ENCODE measurements at regions of chr6 and their contacts with region 1.

Region 1: GRCh38 chr6:16802071-16802470 is 40.8 kb upstream of the ATXN1 start:
- DNase-seq: no peak

Region 2: DNA sequence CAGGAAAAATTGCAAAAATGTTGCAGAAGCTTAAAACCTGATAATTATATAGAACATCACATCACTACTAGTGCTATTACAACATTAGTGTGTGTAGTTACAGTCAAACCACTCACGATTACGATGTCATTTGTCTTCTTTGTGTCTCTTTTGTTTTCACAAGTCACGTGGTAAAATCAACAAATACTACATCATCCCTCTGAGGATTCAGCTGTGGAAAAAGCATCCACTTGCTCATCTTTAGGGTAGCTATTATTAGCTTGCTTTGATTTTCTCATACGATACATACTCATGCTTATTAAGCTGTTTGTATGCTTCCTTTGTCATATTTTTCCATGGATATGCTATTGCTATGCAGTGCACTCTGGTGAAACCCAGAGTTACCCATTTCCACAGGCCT is 18.6 kb before region 1 on chr6:
- intact Hi-C with region 1: loop called in 1 of 2 experiments (anchors 1 kb)
- DNase-seq: no peak

Region 3: GRCh38 chr6:16824845-16825685 is 23.0 kb after region 1 on chr6:
- intact Hi-C with region 1: no loop called
- DNase-seq: no peak

Region 4: GRCh38 chr6:16872543-16873235 is 70.6 kb after region 1 on chr6:
- intact Hi-C with region 1: no loop called
- DNase-seq: no peak

Measured in posterior vena cava (tissue), 2 donors.